ENCODE measurements at regions of chr22 and their contacts with region 1.

Region 1: GRCh38 chr22:39117585-39118191 is 20.6 kb downstream of the APOBEC3H start:
- DNase-seq: peak; percentile 89
- H3K4me3 Mint-ChIP-seq: peak overlapping the region; percentile 11
- H3K27ac Mint-ChIP-seq: peak overlapping the region; percentile 95
- H3K4me1 Mint-ChIP-seq: peaks cover 62% of the 10 kb centered on the region
- H3K27me3 Mint-ChIP-seq: no peaks in the 10 kb centered on the region

Region 2: DNA sequence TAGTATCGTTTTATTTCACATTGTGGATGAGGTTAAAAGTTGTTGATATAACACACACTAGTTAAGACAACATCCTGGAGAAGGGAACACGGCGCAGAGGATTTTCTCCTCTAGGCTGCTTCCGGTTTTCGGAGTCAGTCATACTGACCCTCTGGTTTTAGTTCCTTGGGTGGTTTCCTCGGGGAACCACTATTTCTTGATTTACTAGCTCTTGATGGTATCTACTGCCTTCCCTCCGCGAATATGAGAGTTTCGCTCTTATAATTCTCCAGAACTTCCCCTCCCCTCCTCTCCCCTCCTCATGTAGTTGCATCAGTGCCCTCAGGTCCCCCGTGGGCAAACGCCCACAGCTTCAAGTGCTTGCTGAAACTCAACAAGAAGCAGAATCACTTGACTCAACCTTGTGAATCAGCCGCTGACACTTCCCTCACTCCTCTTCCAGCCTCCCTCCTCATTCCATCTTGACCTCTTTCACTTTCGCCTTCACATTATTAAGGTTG is 176.2 kb before region 1 on chr22:
- CTCF ChIA-PET with region 1: interaction called, 4 read pairs
- POLR2A ChIA-PET with region 1: interaction called, 5 read pairs
- intact Hi-C with region 1: loop called (anchors 1 kb)
- DNase-seq: peak; percentile 89
- H3K4me3 Mint-ChIP-seq: peak overlapping the region; percentile 45
- H3K27ac Mint-ChIP-seq: peak overlapping the region; percentile 80
- H3K4me1 Mint-ChIP-seq: peaks cover 35% of the 10 kb centered on the region
- H3K27me3 Mint-ChIP-seq: peaks cover 28% of the 10 kb centered on the region

Region 3: GRCh38 chr22:39013942-39014722 is 103.6 kb before region 1 on chr22 and contains the start of gene APOBEC3C:
- CTCF ChIA-PET with region 1: interaction called, 3 read pairs
- POLR2A ChIA-PET with region 1: no interaction called
- intact Hi-C with region 1: loop called (anchors 2 kb)
- DNase-seq: peak; percentile 92
- H3K4me3 Mint-ChIP-seq: peak within 1 kb of the TSS; percentile 97
- H3K27ac Mint-ChIP-seq: peak within 1 kb of the TSS; percentile 96
- H3K4me1 Mint-ChIP-seq: peaks cover 48% of the 10 kb centered on the region
- H3K27me3 Mint-ChIP-seq: no peaks in the 10 kb centered on the region
- total RNA-seq, gene APOBEC3C: 141 to 142 TPM

Region 4: DNA sequence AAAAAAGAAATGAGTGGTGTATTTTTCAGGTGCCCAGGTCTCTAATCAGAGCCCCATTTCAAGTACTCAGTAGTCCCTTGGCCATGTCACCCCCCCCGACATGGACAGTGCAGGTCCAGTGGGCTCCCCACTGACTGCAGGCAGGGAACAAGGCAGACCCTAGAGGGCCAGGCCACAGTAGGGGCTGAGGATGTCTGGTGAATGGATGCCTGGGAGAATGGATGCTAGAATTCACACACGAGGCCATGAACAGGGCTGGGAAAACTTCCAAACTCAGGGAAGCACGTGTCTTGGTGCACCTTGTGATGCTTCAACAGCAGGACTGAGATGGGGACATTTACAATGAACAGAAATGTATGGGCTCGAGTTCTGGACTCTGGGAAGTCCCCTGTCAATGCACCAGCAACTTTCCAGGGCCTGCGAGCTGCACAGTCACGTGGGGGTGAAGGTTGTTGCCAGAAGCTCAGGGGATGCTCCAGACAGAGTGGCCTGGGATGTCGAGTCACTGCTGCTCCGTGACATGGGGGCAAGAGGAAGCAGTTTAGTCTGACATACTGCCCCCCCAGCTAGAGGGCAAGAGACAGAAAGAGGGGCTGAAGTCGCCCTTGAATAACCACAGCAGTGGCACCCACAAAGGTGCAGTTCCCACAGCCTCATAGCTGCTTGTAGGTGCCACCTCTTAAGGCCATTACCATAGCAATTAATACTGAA is 37.5 kb before region 1 on chr22:
- CTCF ChIA-PET with region 1: interaction called, 6 read pairs
- POLR2A ChIA-PET with region 1: interaction called, 4 read pairs
- intact Hi-C with region 1: loop called (anchors 5 kb)
- DNase-seq: no peak
- H3K4me3 Mint-ChIP-seq: peak overlapping the region; percentile 13
- H3K27ac Mint-ChIP-seq: peak overlapping the region; percentile 39
- H3K4me1 Mint-ChIP-seq: peaks cover 50% of the 10 kb centered on the region
- H3K27me3 Mint-ChIP-seq: no peaks in the 10 kb centered on the region

Region 5: GRCh38 chr22:39097098-39098020 is 20.3 kb before region 1 on chr22 and contains the start of gene APOBEC3H:
- CTCF ChIA-PET with region 1: interaction called, 10 read pairs
- POLR2A ChIA-PET with region 1: interaction called, 7 read pairs
- intact Hi-C with region 1: loop called (anchors 1 kb)
- DNase-seq: peak; percentile 74
- H3K4me3 Mint-ChIP-seq: peak within 1 kb of the TSS; percentile 78
- H3K27ac Mint-ChIP-seq: peak within 1 kb of the TSS; percentile 91
- H3K4me1 Mint-ChIP-seq: peaks cover 78% of the 10 kb centered on the region
- H3K27me3 Mint-ChIP-seq: no peaks in the 10 kb centered on the region
- total RNA-seq, gene APOBEC3H: 23.6 to 25.3 TPM

Measured in activated CD4-positive, alpha-beta memory T cell treated with anti-CD3 and anti-CD28 coated beads for 36 hours (primary cell).